Aorta (tissue), 5 donors: ENCODE measurements at regions of chr2 and their contacts with region 1.

Region 1: GRCh38 chr2:100818606-100819369 is 1.2 kb upstream of the NPAS2 start:
- DNase-seq: peak; percentile 76 to 90
- ATAC-seq: peak; percentile 89
- H3K4me3 ChIP-seq: peak overlapping the region; percentile 86 to 91
- H3K27ac ChIP-seq: peak overlapping the region; percentile 79 to 83
- H3K4me1 ChIP-seq: peaks cover 4% of the 10 kb centered on the region in 2 donors
- H3K27me3 ChIP-seq: no peaks in the 10 kb centered on the region

Region 2: GRCh38 chr2:100606726-100607343 is 212.0 kb before region 1 on chr2:
- intact Hi-C with region 1: loop called in 1 of 2 experiments (anchors 10 kb)
- DNase-seq: no peak
- ATAC-seq: no peak
- H3K4me3 ChIP-seq: no peak overlapping the region
- H3K27ac ChIP-seq: no peak overlapping the region
- H3K4me1 ChIP-seq: no peaks in the 10 kb centered on the region
- H3K27me3 ChIP-seq: no peaks in the 10 kb centered on the region

Region 3: DNA sequence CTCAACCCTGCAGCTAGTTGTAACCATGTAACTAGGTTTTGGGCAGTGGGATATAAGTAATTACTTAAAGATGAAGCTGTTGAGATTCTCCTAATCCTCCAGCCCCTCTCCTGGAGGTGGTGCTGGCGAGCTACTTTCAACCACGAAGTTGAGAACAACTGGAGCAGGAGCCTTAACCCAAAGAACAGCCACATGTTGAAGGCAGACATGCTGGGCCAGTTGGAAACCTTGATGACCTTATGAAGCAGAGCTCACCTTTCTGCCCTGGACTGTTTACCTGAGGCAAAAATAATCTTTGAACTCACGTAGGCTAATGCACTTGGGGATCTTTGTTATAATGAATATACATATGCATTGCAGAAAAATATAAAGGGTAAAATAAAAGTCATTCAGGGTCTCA is 88.4 kb before region 1 on chr2:
- intact Hi-C with region 1: loop called in 1 of 2 experiments (anchors 5 kb)
- DNase-seq: peak; percentile 73 to 87
- ATAC-seq: peak; percentile 44
- H3K4me3 ChIP-seq: no peak overlapping the region
- H3K27ac ChIP-seq: no peak overlapping the region
- H3K4me1 ChIP-seq: peaks cover 0 to 2% of the 10 kb centered on the region in 2 donors
- H3K27me3 ChIP-seq: no peaks in the 10 kb centered on the region

Region 4: DNA sequence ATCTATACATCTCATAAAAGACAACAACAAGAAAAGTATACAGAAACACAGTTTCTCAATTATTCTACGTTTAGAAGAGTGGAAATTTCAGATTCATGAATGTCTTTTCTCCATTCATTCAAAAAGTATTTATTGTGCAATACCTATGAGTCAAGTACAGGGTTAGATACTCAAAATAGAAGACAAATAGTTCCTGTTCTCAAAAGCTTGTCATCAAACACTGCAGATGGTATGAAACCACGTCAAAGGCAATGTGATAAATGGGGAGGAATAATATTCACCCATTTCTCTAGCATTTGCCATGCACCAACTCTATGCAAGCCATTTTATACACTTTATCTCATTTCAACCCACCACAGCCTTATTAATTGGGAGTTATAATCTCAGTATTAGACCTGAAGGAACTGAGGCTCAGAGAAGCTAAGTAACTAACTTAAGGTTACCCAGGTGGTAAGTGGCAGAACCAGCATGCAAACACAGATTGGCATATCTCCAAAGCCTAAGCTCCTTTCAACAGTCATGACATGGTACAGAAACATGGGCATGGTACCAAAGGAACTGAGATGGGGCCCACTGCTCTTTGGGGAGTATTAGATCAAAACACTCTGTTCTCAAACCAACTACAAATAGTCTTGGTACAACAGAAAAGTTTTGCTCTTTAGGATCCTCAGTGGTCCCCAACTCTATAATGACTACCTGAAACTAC is 66.0 kb before region 1 on chr2:
- intact Hi-C with region 1: loop called (anchors 5 kb)
- DNase-seq: no peak
- ATAC-seq: peak; percentile 83
- H3K4me3 ChIP-seq: no peak overlapping the region
- H3K27ac ChIP-seq: peak overlapping the region in 1 of 2 donors; percentile 35
- H3K4me1 ChIP-seq: peaks cover 5 to 13% of the 10 kb centered on the region in 2 donors
- H3K27me3 ChIP-seq: no peaks in the 10 kb centered on the region

Region 5: DNA sequence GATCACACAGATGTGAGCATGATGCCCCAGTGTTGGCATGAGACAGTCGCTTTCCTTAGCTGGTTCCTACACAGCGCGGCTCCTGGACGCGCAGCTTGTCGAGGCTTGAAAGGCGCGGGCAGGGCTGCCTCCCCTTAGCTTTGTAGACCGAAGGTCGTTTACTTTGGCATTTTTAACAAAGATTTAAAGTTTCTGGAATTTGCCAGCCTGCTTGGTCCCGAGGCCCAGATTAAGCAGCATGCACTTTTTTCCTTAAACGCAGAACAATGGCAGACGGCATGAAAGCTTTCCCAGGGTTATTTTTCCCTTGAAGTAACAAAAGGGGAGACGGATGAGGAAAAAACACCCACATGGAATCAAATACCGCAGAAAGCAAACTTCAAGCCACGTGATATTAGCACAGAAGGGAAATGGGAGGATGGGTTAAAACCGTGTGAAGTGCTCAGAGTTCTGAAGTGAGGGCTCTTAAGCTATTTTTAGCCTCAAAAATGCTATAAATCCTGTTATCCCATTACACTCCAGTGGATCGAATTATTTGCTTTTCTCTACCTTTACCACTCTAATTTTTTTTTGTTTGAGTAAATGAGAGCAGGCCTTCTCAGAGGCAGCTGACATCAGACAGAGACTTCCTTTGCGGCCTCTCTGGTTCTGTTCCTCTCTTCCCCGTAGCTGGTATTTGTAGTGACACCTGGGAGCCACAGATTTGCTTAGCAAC is 56.9 kb after region 1 on chr2:
- intact Hi-C with region 1: loop called in 1 of 2 experiments (anchors 5 kb)
- DNase-seq: no peak
- ATAC-seq: peak; percentile 48
- H3K4me3 ChIP-seq: no peak overlapping the region
- H3K27ac ChIP-seq: peak overlapping the region in 1 of 2 donors; percentile 65
- H3K4me1 ChIP-seq: peaks cover 0 to 2% of the 10 kb centered on the region in 2 donors
- H3K27me3 ChIP-seq: no peaks in the 10 kb centered on the region

Region 6: GRCh38 chr2:100976645-100977391 is 158.0 kb after region 1 on chr2:
- intact Hi-C with region 1: loop called (anchors 2 to 5 kb)
- DNase-seq: peak in 1 of 2 donors; percentile 26
- ATAC-seq: no peak
- H3K4me3 ChIP-seq: no peak overlapping the region
- H3K27ac ChIP-seq: peak overlapping the region in 1 of 2 donors; percentile 1
- H3K4me1 ChIP-seq: no peaks in the 10 kb centered on the region
- H3K27me3 ChIP-seq: no peaks in the 10 kb centered on the region